IMR-90 (cell line): ENCODE measurements at regions of chr2 and their contacts with region 1.

Region 1: DNA sequence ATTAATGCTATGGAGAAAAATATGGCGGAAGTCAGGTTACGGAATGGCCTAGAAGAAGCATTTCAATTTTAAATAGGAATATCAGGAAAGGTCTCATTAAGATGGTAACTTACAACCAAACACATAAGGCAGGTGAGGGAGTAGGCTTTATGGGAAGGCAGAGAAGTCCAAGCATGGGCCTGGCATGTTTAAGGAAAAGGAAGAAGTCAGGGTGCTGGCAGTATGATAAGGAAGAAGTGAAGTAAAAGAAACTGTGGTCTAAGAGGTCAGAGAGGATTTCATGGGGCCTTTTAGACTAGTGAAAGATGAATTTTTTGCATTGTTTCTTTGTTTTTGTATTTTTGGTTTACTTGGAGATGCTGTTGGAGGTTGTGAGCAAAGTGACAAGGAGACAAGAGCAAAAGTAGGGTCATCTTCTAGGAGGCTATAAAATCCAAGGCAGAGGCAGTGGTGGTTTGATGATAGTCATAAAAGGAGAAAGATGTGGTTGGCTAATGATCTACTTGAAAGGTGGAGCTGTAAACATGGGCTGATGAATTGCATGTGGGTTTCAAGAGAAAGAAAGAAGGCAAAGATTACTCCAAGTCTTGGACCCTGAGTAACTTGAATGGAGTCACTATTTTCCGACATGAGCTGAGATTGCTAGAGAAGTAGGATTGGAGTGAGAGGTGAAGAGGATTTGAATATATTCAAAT is 354.3 kb downstream of the GPD2 start:
- DNase-seq: no peak
- ATAC-seq: no peak
- H3K4me3 ChIP-seq: no peak overlapping the region
- H3K27ac ChIP-seq: no peak overlapping the region
- H3K4me1 ChIP-seq: no peaks in the 10 kb centered on the region
- H3K27me3 ChIP-seq: no peaks in the 10 kb centered on the region
- CTCF ChIP-seq: no peak
- POLR2A ChIP-seq: no peak
- RAD21 ChIP-seq: no peak

Region 2: GRCh38 chr2:156719036-156719435 is 71.5 kb before region 1 on chr2:
- CTCF ChIA-PET with region 1: no interaction called
- POLR2A ChIA-PET with region 1: no interaction called
- dilution Hi-C with region 1: no loop called
- in situ Hi-C with region 1: no loop called
- intact Hi-C with region 1: loop called (anchors 2 kb)
- DNase-seq: no peak
- ATAC-seq: no peak
- H3K4me3 ChIP-seq: no peak overlapping the region
- H3K27ac ChIP-seq: no peak overlapping the region
- H3K4me1 ChIP-seq: no peaks in the 10 kb centered on the region
- H3K27me3 ChIP-seq: no peaks in the 10 kb centered on the region
- CTCF ChIP-seq: no peak
- POLR2A ChIP-seq: no peak
- RAD21 ChIP-seq: no peak